Mammary epithelial cell (primary cell): ENCODE measurements at regions of chr7 and their contacts with region 1.

Region 1: DNA sequence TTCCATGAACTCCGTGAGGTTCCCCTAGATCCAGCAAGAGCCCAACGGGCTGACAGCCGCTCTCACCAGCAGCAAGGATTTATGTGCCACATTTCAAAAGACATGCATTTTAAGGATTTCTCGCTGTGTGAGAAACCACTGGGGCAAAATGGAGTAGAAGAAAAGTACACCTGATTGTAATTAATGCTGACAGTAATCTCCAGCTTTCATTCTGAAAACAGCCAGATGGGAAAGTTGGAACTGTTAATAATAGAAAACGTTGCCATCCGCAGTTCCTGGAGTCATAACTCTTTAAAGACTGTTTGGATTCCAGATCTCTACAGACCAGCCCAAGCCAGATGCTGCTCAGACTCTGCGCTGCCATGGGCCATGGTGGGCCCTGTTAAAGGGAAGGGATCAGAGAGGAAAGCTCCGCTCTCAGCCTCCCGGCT is 216.9 kb upstream of the GLI3 start:
- DNase-seq: no peak
- H3K4me3 ChIP-seq: no peak overlapping the region
- H3K27ac ChIP-seq: no peak overlapping the region
- H3K4me1 ChIP-seq: no peaks in the 10 kb centered on the region
- H3K27me3 ChIP-seq: no peaks in the 10 kb centered on the region
- CTCF ChIP-seq: no peak

Region 2: GRCh38 chr7:42485301-42485766 is 31.4 kb after region 1 on chr7:
- CTCF ChIA-PET with region 1: no interaction called
- dilution Hi-C with region 1: loop called (anchors 5 kb)
- in situ Hi-C with region 1: no loop called
- intact Hi-C with region 1: no loop called
- DNase-seq: no peak
- H3K4me3 ChIP-seq: no peak overlapping the region
- H3K27ac ChIP-seq: no peak overlapping the region
- H3K4me1 ChIP-seq: peaks cover 2% of the 10 kb centered on the region
- H3K27me3 ChIP-seq: no peaks in the 10 kb centered on the region
- CTCF ChIP-seq: no peak